Activated CD4-positive, alpha-beta memory T cell treated with anti-CD3 and anti-CD28 coated beads, Interleukin-2, amount 10 ng/mL, durations not matched to agents 7 days and 5 days (primary cell): ENCODE measurements at regions of chr5 and their contacts with region 1.

Region 1: DNA sequence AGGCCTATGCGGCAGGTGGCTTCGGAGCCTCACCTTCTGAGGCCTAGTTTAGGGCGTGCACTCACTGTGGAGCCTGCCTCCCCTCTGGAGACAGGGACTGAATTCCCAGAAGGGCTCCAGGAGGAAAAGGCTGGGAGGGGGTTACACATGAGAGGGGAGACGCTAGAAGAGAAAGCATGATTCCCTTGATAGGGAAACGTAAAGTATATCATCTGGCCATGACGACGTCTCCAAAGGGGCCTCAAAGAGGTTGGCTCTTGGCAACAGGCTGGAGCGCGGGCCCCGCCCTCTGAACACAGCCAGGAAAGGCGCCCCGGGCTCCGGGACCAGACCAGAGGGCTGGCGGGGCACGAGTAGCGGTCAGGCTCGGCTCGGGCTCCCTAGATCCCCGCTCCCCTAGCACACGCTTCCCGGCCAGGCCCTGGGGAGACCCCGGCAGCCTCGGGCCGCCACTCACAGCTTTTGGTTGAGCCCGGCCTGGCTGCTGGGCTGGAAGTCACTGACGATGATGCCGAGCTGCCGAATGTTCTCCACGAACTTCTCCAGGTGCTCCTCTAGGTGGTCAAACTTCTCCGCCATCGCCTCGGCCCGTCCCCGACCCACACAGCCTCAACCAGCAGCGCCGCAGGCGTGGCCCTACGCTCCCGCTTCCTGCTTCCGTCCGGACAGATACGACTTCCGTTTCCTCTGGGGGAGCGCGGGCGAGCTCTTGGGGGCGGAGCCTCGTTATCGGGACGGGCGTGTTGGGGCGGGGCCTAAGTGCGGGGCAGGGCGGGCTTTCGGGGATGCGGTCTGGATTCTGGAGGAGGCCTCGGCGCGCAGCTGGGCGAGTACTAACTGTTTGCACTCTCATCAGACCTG is at the start of gene MED10:
- DNase-seq: peak; percentile 97
- H3K4me3 Mint-ChIP-seq: peak within 1 kb of the TSS; percentile 94
- H3K27ac Mint-ChIP-seq: peak within 1 kb of the TSS; percentile 93
- H3K4me1 Mint-ChIP-seq: peaks cover 46% of the 10 kb centered on the region
- H3K27me3 Mint-ChIP-seq: peaks cover 4% of the 10 kb centered on the region
- total RNA-seq, gene MED10: 50.1 to 52.9 TPM

Region 2: GRCh38 chr5:6216471-6217075 is 161.6 kb before region 1 on chr5:
- CTCF ChIA-PET with region 1: no interaction called
- POLR2A ChIA-PET with region 1: no interaction called
- DNase-seq: no peak
- H3K4me3 Mint-ChIP-seq: no peak overlapping the region
- H3K27ac Mint-ChIP-seq: no peak overlapping the region
- H3K4me1 Mint-ChIP-seq: no peaks in the 10 kb centered on the region
- H3K27me3 Mint-ChIP-seq: no peaks in the 10 kb centered on the region

Region 3: DNA sequence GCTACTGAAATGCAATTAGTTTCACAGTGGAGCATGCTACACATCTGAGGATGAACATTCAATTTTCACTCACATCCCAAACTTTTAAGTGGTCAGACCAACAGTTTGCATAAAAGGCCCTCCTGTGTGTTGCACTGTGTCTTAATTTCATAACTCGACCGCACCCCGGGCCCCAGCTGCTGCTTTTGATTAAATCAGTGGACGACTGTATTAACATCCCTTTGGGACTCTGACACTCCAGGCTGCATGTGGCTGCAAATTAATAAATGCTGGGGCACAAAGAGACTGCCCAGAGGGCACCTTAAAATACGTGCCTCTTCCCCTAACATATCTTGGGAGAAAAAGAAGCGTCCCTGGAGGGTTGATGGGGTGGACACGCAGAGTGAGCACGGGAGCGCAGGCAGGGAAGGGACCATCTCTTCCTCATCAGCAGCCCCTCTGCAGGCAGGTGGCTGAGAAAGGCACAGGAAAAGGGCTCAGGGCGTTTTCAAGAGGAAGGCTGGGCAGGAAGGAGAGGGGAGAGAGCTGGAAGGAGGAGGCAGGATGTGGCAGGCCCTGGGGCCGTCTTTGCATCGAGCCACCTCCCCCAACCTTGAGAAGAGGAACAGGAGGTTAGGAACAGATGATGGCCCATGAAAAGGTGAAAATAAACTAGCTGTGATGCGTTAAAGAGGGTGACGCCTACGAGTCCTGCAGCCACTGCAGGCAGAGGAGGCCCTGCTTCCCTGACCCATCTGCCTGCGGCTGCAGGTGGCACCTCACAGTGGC is 18.4 kb before region 1 on chr5:
- CTCF ChIA-PET with region 1: interaction called, 5 read pairs
- POLR2A ChIA-PET with region 1: interaction called, 13 read pairs
- DNase-seq: peak; percentile 62
- H3K4me3 Mint-ChIP-seq: peak overlapping the region; percentile 44
- H3K27ac Mint-ChIP-seq: peak overlapping the region; percentile 84
- H3K4me1 Mint-ChIP-seq: peaks cover 22% of the 10 kb centered on the region
- H3K27me3 Mint-ChIP-seq: no peaks in the 10 kb centered on the region

Region 4: GRCh38 chr5:6365142-6365976 is 12.8 kb before region 1 on chr5:
- CTCF ChIA-PET with region 1: interaction called, 5 read pairs
- POLR2A ChIA-PET with region 1: interaction called, 16 read pairs
- DNase-seq: no peak
- H3K4me3 Mint-ChIP-seq: no peak overlapping the region
- H3K27ac Mint-ChIP-seq: no peak overlapping the region
- H3K4me1 Mint-ChIP-seq: peaks cover 11% of the 10 kb centered on the region
- H3K27me3 Mint-ChIP-seq: no peaks in the 10 kb centered on the region